HepG2 (cell line): ENCODE measurements at regions of chr15 and their contacts with region 1.

Region 1: DNA sequence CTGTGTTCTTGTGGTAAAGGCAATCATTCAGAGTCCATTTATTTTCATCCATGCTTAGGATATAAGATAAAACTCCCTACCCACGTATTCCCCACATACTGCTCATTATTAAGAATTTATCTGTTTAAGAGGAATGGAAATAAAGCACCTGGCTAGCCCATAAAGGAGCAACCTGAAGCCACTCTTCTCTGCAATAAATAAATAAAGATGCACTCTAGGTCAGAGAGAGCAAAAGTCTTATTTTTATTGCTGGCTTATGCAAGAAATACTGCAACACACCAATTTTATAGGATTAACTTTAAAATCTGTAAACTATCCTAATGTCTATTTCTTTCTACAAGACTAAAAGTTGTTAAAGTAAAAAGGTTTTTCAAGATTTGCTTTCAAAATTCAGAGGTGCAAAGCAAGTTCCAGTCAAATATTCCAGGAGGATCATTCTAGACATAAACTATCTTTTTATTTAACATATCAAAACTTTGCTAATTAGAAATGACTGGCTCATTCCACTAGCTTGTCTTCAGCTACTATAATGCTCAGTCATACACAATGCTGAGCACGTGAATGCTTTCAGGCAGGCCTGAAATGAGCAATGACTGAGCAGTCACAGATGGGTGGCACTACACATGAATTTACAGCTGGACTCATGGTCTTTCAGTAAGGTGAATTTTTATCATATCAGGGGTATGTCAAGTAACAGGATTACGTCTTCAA is 7.1 kb downstream of the TJP1 start:
- DNase-seq: peak; percentile 41
- ATAC-seq: peak; percentile 91
- H3K4me3 ChIP-seq: no peak overlapping the region
- H3K27ac ChIP-seq: peak overlapping the region; percentile 53
- H3K4me1 ChIP-seq: peaks cover 62% of the 10 kb centered on the region
- H3K27me3 ChIP-seq: no peaks in the 10 kb centered on the region
- CTCF ChIP-seq: no peak
- EP300 ChIP-seq: no peak
- POLR2A ChIP-seq: no peak
- RAD21 ChIP-seq: no peak

Region 2: DNA sequence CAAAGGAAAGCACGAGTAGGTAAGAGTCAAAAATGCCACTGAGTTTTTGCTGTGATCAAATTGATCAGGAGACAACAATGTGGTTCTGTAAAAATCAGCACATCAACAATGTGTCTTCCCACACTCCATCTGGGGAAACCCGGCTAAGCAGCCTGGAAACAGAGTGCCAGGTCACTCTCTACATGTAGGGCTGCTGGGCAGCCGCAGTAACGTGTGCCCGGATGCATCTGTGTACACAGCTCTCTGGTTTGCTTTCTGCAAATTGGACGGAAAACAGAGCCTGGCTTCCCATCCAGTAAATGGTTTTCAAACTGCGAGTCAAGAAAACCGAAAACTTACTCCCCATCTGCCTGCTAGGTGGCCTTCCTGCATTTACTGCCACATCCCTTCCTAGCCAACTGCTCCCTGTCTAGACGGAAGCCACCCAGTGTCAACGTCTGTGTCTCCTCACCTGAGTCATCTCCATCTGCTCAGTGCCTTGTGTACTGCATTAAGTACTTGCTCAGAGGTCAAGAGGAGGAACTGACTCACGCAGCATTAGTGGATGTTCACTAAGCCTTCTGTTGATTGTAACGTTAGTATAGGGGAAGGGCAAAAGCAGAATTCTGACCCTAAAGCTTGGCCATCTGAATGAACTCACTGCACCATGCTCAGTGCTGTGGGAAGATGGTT is 117.0 kb before region 1 on chr15:
- CTCF ChIA-PET with region 1: no interaction called
- POLR2A ChIA-PET with region 1: no interaction called
- in situ Hi-C with region 1: no loop called
- intact Hi-C with region 1: loop called (anchors 10 kb)
- DNase-seq: peak; percentile 61
- ATAC-seq: peak; percentile 59
- H3K4me3 ChIP-seq: no peak overlapping the region
- H3K27ac ChIP-seq: no peak overlapping the region
- H3K4me1 ChIP-seq: peaks cover 47% of the 10 kb centered on the region
- H3K27me3 ChIP-seq: no peaks in the 10 kb centered on the region
- CTCF ChIP-seq: no peak
- EP300 ChIP-seq: no peak
- POLR2A ChIP-seq: no peak
- RAD21 ChIP-seq: no peak

Region 3: GRCh38 chr15:29712149-29712885 is 102.8 kb before region 1 on chr15:
- CTCF ChIA-PET with region 1: no interaction called
- POLR2A ChIA-PET with region 1: no interaction called
- in situ Hi-C with region 1: no loop called
- intact Hi-C with region 1: no loop called
- DNase-seq: no peak
- ATAC-seq: no peak
- H3K4me3 ChIP-seq: no peak overlapping the region
- H3K27ac ChIP-seq: no peak overlapping the region
- H3K4me1 ChIP-seq: peaks cover 15% of the 10 kb centered on the region
- H3K27me3 ChIP-seq: no peaks in the 10 kb centered on the region
- CTCF ChIP-seq: no peak
- EP300 ChIP-seq: no peak
- POLR2A ChIP-seq: no peak
- RAD21 ChIP-seq: no peak

Region 4: GRCh38 chr15:29774900-29775299 is 40.3 kb before region 1 on chr15:
- CTCF ChIA-PET with region 1: no interaction called
- POLR2A ChIA-PET with region 1: no interaction called
- in situ Hi-C with region 1: no loop called
- intact Hi-C with region 1: loop called (anchors 5 kb)
- DNase-seq: peak; percentile 21
- ATAC-seq: no peak
- H3K4me3 ChIP-seq: no peak overlapping the region
- H3K27ac ChIP-seq: no peak overlapping the region
- H3K4me1 ChIP-seq: peaks cover 39% of the 10 kb centered on the region
- H3K27me3 ChIP-seq: no peaks in the 10 kb centered on the region
- CTCF ChIP-seq: no peak
- EP300 ChIP-seq: no peak
- POLR2A ChIP-seq: no peak
- RAD21 ChIP-seq: no peak

Region 5: GRCh38 chr15:30023798-30024295 is 208.7 kb after region 1 on chr15:
- CTCF ChIA-PET with region 1: no interaction called
- POLR2A ChIA-PET with region 1: no interaction called
- in situ Hi-C with region 1: no loop called
- intact Hi-C with region 1: no loop called
- DNase-seq: no peak
- ATAC-seq: no peak
- H3K4me3 ChIP-seq: no peak overlapping the region
- H3K27ac ChIP-seq: no peak overlapping the region
- H3K4me1 ChIP-seq: no peaks in the 10 kb centered on the region
- H3K27me3 ChIP-seq: peaks cover 1 to 12% of the 10 kb centered on the region in 2 experiments; a peak in 3 of 5 replicates
- CTCF ChIP-seq: no peak
- EP300 ChIP-seq: no peak
- POLR2A ChIP-seq: no peak
- RAD21 ChIP-seq: no peak